Esophagus muscularis mucosa (tissue), 4 donors: ENCODE measurements at regions of chr1 and their contacts with region 1.

Region 1: DNA sequence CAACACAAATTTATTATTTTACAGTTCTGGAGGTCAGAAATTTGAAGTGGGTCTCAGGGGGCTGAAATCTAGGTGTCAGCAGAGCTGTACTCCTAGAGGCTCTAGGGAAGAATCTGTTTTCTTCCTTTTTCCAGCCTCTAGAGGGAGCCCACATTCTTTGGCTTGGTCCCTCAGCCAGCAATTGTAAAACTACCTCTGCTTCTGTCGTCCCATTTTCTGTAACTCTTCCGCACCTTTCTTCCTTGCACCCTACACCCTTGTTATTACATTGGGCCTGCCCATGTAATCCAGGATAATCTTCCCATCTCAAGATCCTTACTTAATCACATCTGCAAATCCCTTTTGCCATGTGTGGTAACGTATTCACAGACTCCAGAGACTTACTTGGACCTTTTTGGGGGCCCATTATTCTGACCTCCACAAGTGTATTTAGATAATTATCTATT is 24.8 kb upstream of the THEM4 start:
- DNase-seq: peak; percentile 72
- H3K4me3 ChIP-seq: no peak overlapping the region
- H3K27ac ChIP-seq: no peak overlapping the region
- H3K4me1 ChIP-seq: peaks cover 0 to 3% (median 0%) of the 10 kb centered on the region in 4 donors
- H3K27me3 ChIP-seq: no peaks in the 10 kb centered on the region
- CTCF ChIP-seq: peak; percentile 74 to 84 (median 78)
- EP300 ChIP-seq: no peak
- POLR2A ChIP-seq: no peak

Region 2: DNA sequence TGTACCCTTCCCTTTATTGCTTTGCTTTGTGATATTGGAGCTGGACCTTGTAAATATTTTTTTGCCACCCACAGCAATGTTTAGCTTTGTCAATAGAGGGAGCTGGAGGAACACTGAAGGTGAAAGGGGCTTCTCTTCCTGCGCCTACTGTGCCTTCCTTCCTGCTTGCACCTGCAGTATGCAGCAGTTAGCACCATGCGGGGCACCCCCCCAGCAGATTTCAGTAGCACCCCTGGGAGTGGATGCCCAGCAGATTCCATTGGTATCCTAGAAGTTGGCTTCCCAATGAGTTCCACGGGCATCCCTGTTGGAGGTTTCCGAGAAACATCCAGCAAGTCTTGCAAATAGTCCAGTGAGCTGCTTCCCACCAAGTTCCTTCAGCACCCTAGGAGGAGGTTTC is 34.0 kb after region 1 on chr1:
- intact Hi-C with region 1: loop called (anchors 5 kb)
- DNase-seq: no peak
- H3K4me3 ChIP-seq: no peak overlapping the region
- H3K27ac ChIP-seq: no peak overlapping the region
- H3K4me1 ChIP-seq: peaks cover 15 to 33% (median 18%) of the 10 kb centered on the region in 4 donors
- H3K27me3 ChIP-seq: no peaks in the 10 kb centered on the region
- CTCF ChIP-seq: peak; percentile 70 to 83 (median 71)
- EP300 ChIP-seq: no peak
- POLR2A ChIP-seq: no peak